A673 (cell line): ENCODE measurements at regions of chr19 and their contacts with region 1.

Region 1: GRCh38 chr19:18328340-18329034 is 5.6 kb upstream of the LSM4 start:
- DNase-seq: peak; percentile 99
- H3K4me3 ChIP-seq: peak overlapping the region; percentile 29
- H3K27ac ChIP-seq: peak overlapping the region; percentile 35
- H3K4me1 ChIP-seq: peaks cover 15% of the 10 kb centered on the region
- H3K27me3 ChIP-seq: no peaks in the 10 kb centered on the region
- CTCF ChIP-seq: peak; percentile 94

Region 2: DNA sequence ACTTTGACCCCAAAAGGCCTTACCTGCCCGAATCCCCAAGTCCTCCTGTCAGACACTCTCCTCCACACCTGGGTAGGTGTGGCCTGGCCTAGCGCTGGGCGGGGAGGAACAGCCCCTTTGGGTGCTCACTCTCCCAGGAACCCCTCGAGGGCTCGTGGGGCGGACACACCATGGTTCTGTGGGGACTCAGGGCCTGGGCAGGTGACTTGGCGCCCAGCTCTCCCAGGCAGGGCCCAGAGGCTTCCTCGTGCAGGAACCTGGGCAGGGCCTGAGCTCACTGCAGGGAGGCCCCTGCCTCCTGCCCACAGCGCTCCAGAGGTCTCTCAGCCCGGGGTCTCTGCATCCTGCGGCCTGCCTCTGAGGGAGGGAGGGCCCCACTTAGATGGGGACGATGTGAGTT is 17.5 kb before region 1 on chr19:
- CTCF ChIA-PET with region 1: no interaction called
- POLR2A ChIA-PET with region 1: no interaction called
- intact Hi-C with region 1: no loop called
- DNase-seq: no peak
- H3K4me3 ChIP-seq: no peak overlapping the region
- H3K27ac ChIP-seq: no peak overlapping the region
- H3K4me1 ChIP-seq: no peaks in the 10 kb centered on the region
- H3K27me3 ChIP-seq: no peaks in the 10 kb centered on the region
- CTCF ChIP-seq: no peak

Region 3: GRCh38 chr19:18928018-18928805 is 599.7 kb after region 1 on chr19:
- CTCF ChIA-PET with region 1: no interaction called
- POLR2A ChIA-PET with region 1: interaction called, 11 read pairs
- intact Hi-C with region 1: no loop called
- DNase-seq: no peak
- H3K4me3 ChIP-seq: no peak overlapping the region
- H3K27ac ChIP-seq: no peak overlapping the region
- H3K4me1 ChIP-seq: no peaks in the 10 kb centered on the region
- H3K27me3 ChIP-seq: no peaks in the 10 kb centered on the region
- CTCF ChIP-seq: no peak